Gastrocnemius medialis (tissue), 4 donors: ENCODE measurements at regions of chr17 and their contacts with region 1.

Region 1: GRCh38 chr17:56960596-56961538 is at the start of gene COIL:
- DNase-seq: peak; percentile 81 to 87
- ATAC-seq: peak; percentile 97 to 99
- H3K4me3 ChIP-seq: peak within 1 kb of the TSS; percentile 74 to 86 (median 80)
- H3K27ac ChIP-seq: peak within 1 kb of the TSS; percentile 90 to 95 (median 91)
- H3K4me1 ChIP-seq: peaks cover 15 to 25% of the 10 kb centered on the region in 2 donors
- H3K27me3 ChIP-seq: no peaks in the 10 kb centered on the region
- CTCF ChIP-seq: peak; percentile 98 to 100 (median 99)
- POLR2A ChIP-seq: peak in 1 of 2 donors; percentile 41
- total RNA-seq, gene COIL: 6.3 to 9.7 (median 9.0) TPM

Region 2: GRCh38 chr17:56833809-56834379 is 127.0 kb before region 1 on chr17 and contains the starts of genes C17orf67 and DGKE:
- in situ Hi-C with region 1: no loop called
- intact Hi-C with region 1: loop called (anchors 5 kb)
- DNase-seq: peak; percentile 93 to 94
- ATAC-seq: peak; percentile 93 to 96
- H3K4me3 ChIP-seq: peak within 1 kb of the TSS; percentile 65 to 73 (median 69)
- H3K27ac ChIP-seq: peak within 1 kb of the TSS; percentile 57 to 84 (median 72)
- H3K4me1 ChIP-seq: peaks cover 10 to 13% of the 10 kb centered on the region in 2 donors
- H3K27me3 ChIP-seq: peaks cover 0 to 5% (median 0%) of the 10 kb centered on the region in 3 donors
- CTCF ChIP-seq: no peak
- POLR2A ChIP-seq: peak; percentile 39 to 63
- total RNA-seq, gene C17orf67: 0.16 TPM in 1 of 4 donors, not detected in the others
- total RNA-seq, gene DGKE: 0.53 to 3.0 (median 1.6) TPM

Region 3: GRCh38 chr17:56913864-56914640 is 46.8 kb before region 1 on chr17 and contains the start of gene TRIM25:
- in situ Hi-C with region 1: no loop called
- intact Hi-C with region 1: loop called (anchors 1 kb)
- DNase-seq: peak; percentile 92 to 93
- ATAC-seq: peak; percentile 78 to 84
- H3K4me3 ChIP-seq: peak within 1 kb of the TSS; percentile 68 to 87 (median 74)
- H3K27ac ChIP-seq: peak within 1 kb of the TSS; percentile 85 to 95 (median 87)
- H3K4me1 ChIP-seq: peaks cover 53 to 54% of the 10 kb centered on the region in 2 donors
- H3K27me3 ChIP-seq: no peaks in the 10 kb centered on the region
- CTCF ChIP-seq: no peak
- POLR2A ChIP-seq: peak; percentile 98 to 99
- total RNA-seq, gene TRIM25: 8.5 to 18.2 (median 15.1) TPM

Region 4: DNA sequence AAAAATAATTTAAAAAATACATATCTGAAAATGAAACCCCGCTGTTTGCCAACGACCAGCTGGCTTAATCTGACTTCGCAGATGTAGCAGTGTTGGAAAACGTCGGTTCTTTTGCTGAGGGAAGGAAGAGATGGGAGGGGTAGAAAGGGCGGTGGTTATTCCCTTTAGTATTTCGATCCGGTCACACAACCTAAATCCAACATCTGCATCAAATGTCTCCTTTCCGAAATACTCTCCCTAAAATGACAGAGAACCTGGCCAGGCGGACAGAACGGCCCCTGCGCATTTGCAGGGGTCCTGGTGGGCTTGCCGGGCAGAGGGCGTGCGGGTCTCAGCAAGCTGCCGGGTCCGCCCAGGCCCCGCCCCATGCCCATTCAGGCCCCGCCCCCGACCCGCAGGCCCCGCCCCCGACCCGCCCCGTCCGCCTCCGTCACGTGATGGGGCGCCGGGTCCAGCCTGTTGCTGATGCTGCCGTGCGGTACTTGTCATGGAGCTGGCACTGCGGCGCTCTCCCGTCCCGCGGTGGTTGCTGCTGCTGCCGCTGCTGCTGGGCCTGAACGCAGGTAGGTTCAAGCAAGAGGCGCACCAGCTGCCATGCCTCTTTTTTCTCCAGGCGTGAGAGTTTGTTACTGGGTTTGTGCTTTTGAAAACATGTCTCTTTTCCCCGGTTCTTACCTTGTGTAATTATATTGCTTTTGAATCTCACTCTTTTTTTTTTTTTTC is 17.0 kb after region 1 on chr17 and contains the start of gene SCPEP1:
- in situ Hi-C with region 1: no loop called
- intact Hi-C with region 1: loop called (anchors 1 kb)
- DNase-seq: peak; percentile 86 to 87
- ATAC-seq: peak; percentile 89 to 92
- H3K4me3 ChIP-seq: peak within 1 kb of the TSS; percentile 65 to 79 (median 75)
- H3K27ac ChIP-seq: peak within 1 kb of the TSS; percentile 67 to 84 (median 76)
- H3K4me1 ChIP-seq: peaks cover 12% of the 10 kb centered on the region in 2 donors
- H3K27me3 ChIP-seq: no peaks in the 10 kb centered on the region
- CTCF ChIP-seq: no peak
- POLR2A ChIP-seq: peak; percentile 47 to 65
- total RNA-seq, gene SCPEP1: 9.9 to 44.7 (median 30.2) TPM

Region 5: DNA sequence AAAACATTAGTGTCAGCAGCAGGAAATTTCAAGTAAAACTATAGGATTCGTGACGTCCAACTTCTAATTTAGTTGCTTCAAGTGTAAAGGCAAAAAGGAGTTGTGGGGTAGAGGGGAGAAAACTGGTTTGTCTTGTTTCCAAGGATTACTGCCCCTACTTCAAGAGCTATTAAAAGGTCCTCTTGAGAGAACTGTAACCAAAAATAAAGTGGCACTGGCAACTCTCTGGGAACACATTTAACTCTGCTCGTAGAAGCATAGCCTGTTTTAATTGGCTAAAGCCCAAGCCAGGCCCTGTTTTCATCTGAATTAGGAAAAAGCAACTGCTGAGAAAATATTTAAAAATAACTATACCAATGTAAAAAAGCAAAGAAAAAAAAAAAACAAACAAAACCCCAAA is 72.4 kb after region 1 on chr17:
- in situ Hi-C with region 1: no loop called
- intact Hi-C with region 1: no loop called
- DNase-seq: no peak
- ATAC-seq: peak in 1 of 2 donors; percentile 59
- H3K4me3 ChIP-seq: no peak overlapping the region
- H3K27ac ChIP-seq: peak overlapping the region; percentile 53 to 83 (median 69)
- H3K4me1 ChIP-seq: peaks cover 35 to 41% of the 10 kb centered on the region in 2 donors
- H3K27me3 ChIP-seq: no peaks in the 10 kb centered on the region
- CTCF ChIP-seq: no peak
- POLR2A ChIP-seq: no peak

Region 6: DNA sequence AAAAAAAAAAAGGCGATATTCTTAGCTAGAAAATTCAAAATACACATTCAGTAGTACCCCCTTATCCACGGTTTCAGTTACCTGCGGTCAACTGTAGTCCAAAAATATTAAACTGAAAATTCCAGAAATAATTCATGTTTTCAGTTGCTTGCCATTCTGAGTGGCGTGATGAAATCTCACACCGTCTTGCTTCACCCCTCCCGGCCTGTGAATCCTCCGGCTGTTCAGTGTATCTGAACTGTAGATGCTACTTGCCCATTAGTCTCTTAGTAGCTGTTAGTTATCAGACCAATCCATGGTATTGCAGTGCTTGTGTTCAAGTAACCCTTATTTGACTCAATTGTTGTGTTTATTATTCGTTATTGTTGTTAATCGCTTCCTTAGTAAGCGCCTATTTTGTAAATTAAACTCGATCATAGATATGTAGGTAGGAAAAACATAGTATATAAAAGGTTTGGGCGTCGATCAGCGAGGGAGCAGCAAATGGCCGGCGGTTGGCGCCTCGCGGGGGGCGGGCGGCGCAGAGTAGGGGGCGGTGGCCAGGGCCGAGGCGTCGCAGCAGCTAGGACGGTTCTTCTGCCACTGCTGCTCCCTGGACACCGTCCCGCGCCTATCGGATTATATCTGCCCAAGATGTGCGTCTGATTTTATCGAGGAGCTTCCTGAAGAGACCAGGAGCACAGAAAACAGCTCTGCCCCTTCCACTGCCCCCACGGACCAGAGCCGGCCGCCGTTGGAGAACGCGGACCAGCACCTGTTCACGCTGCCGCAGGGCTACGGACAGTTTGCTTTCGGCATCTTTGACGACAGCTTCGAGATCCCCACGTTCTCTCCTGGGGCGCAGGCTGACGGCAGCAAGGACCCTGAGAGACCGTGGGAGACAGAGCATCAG is 84.4 kb after region 1 on chr17:
- in situ Hi-C with region 1: no loop called
- intact Hi-C with region 1: no loop called
- DNase-seq: no peak
- ATAC-seq: peak; percentile 6 to 30
- H3K4me3 ChIP-seq: peak overlapping the region; percentile 51 to 59 (median 54)
- H3K27ac ChIP-seq: no peak overlapping the region
- H3K4me1 ChIP-seq: peaks cover 5 to 14% of the 10 kb centered on the region in 2 donors
- H3K27me3 ChIP-seq: peaks cover 0 to 4% (median 3%) of the 10 kb centered on the region in 3 donors
- CTCF ChIP-seq: no peak
- POLR2A ChIP-seq: no peak

Region 7: DNA sequence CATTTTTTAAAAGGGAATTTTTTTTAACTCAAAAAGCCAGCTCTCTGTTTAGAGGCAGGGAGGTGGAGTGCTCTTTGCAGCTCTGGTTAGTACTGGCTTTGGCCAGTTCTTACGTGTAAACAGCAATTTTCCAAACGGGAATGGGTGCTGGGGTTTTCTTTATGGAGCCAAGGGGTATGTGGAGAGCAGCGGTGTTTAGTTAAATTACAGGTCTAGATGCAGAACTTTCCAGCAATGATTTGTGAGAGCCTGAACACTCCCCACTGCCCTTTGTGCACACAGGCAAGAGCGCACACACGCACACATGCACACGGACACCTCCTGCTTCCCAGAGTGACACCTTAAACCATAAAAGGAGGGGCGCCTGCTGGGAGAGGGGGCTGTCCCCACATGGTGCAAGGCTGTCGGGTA is 435.6 kb after region 1 on chr17:
- in situ Hi-C with region 1: no loop called
- intact Hi-C with region 1: no loop called
- DNase-seq: no peak
- ATAC-seq: no peak
- H3K4me3 ChIP-seq: no peak overlapping the region
- H3K27ac ChIP-seq: no peak overlapping the region
- H3K4me1 ChIP-seq: peaks cover 10 to 25% of the 10 kb centered on the region in 2 donors
- H3K27me3 ChIP-seq: no peaks in the 10 kb centered on the region
- CTCF ChIP-seq: no peak
- POLR2A ChIP-seq: no peak